ENCODE measurements at regions of chr17 and their contacts with region 1.

Region 1: GRCh38 chr17:7234083-7234951 is at the start of gene DVL2:
- DNase-seq: peak; percentile 89 to 98 (median 94)
- ATAC-seq: peak; percentile 56 to 67
- H3K4me3 Mint-ChIP-seq: peak within 1 kb of the TSS; percentile 89 to 95 (median 92)
- H3K27ac Mint-ChIP-seq: peak within 1 kb of the TSS; percentile 76 to 99 (median 94)
- H3K4me1 Mint-ChIP-seq: peaks cover 32 to 60% (median 51%) of the 10 kb centered on the region in 4 donors
- H3K27me3 Mint-ChIP-seq: peaks cover 0 to 1% (median 0%) of the 10 kb centered on the region in 5 donors
- polyA plus RNA-seq, gene DVL2: 19.3 to 26.5 (median 19.3) TPM

Region 2: GRCh38 chr17:7252176-7253043 is 18.1 kb after region 1 on chr17 and contains the start of gene ELP5:
- POLR2A ChIA-PET with region 1: interaction called, 89 read pairs
- DNase-seq: peak in 8 of 10 donors; percentile 71 to 99 (median 82)
- ATAC-seq: peak; percentile 57 to 63
- H3K4me3 Mint-ChIP-seq: peak within 1 kb of the TSS; percentile 91 to 98 (median 95)
- H3K27ac Mint-ChIP-seq: peak within 1 kb of the TSS; percentile 90 to 100 (median 100)
- H3K4me1 Mint-ChIP-seq: peaks cover 22 to 51% (median 46%) of the 10 kb centered on the region in 4 donors
- H3K27me3 Mint-ChIP-seq: no peaks in the 10 kb centered on the region
- polyA plus RNA-seq, gene ELP5: 55.5 to 94.0 (median 70.8) TPM

Region 3: DNA sequence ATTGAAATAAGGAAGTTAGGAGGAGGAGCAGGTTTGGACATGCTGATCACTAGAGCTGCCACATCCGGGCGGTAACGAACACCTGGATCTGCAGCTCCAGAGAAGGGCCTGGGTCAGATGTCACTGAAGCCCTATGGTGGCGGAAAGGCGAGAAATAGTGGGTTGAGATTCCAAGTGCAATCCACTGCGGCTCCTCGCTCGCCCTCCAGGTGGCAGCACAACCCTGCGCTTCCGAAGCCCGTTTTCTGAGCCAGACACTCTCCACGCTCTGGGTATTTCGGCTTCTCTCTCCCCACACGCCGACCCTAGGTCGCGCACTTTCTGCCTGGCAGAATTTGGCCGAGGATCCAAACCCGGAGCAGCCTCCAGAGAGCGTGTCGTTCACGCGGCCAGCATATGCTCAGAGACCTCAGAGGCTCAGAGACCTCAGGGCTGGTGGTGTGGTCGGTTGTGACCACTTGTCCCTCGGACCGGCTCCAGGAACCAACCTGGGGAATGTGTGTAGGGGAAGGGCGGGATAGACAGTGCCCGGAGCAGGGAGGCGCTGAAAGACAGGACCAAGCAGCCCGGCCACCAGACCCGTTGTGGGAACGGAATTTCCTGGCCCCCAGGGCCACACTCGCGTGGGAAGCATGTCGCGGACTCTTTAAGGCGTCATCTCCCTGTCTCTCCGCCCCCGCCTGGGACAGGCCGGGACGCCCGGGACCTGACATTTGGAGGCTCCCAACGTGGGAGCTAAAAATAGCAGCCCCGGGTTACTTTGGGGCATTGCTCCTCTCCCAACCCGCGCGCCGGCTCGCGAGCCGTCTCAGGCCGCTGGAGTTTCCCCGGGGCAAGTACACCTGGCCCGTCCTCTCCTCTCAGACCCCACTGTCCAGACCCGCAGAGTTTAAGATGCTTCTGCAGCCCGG is 46.5 kb after region 1 on chr17:
- POLR2A ChIA-PET with region 1: interaction called, 10 read pairs
- DNase-seq: peak; percentile 73 to 91 (median 84)
- ATAC-seq: peak; percentile 84 to 87
- H3K4me3 Mint-ChIP-seq: peak overlapping the region; percentile 74 to 90 (median 84)
- H3K27ac Mint-ChIP-seq: peak overlapping the region in 8 of 10 donors; percentile 43 to 92 (median 56)
- H3K4me1 Mint-ChIP-seq: peaks cover 16 to 38% (median 24%) of the 10 kb centered on the region in 4 donors
- H3K27me3 Mint-ChIP-seq: peaks cover 1 to 19% (median 10%) of the 10 kb centered on the region in 5 donors

Region 4: GRCh38 chr17:7322520-7323194 is 88.3 kb after region 1 on chr17:
- POLR2A ChIA-PET with region 1: no interaction called
- DNase-seq: no peak
- ATAC-seq: no peak
- H3K4me3 Mint-ChIP-seq: no peak overlapping the region
- H3K27ac Mint-ChIP-seq: peak overlapping the region in 1 of 10 donors; percentile 52
- H3K4me1 Mint-ChIP-seq: peaks cover 5 to 21% (median 8%) of the 10 kb centered on the region in 4 donors
- H3K27me3 Mint-ChIP-seq: no peaks in the 10 kb centered on the region